ENCODE measurements at regions of chr12 and their contacts with region 1.

Region 1: GRCh38 chr12:91877022-91877421 is 268.6 kb downstream of the BTG1 start:
- DNase-seq: peak; percentile 75 to 99 (median 86)
- ATAC-seq: peak; percentile 89
- H3K4me3 ChIP-seq: peak overlapping the region; percentile 16 to 29
- H3K4me3 Mint-ChIP-seq: peak overlapping the region; percentile 72
- H3K27ac ChIP-seq: peak overlapping the region; percentile 80 to 96
- H3K27ac Mint-ChIP-seq: peak overlapping the region; percentile 97
- H3K4me1 ChIP-seq: peaks cover 75% of the 10 kb centered on the region
- H3K4me1 Mint-ChIP-seq: peaks cover 74% of the 10 kb centered on the region
- H3K27me3 ChIP-seq: no peaks in the 10 kb centered on the region
- H3K27me3 Mint-ChIP-seq: no peaks in the 10 kb centered on the region
- CTCF ChIP-seq: no peak

Region 2: DNA sequence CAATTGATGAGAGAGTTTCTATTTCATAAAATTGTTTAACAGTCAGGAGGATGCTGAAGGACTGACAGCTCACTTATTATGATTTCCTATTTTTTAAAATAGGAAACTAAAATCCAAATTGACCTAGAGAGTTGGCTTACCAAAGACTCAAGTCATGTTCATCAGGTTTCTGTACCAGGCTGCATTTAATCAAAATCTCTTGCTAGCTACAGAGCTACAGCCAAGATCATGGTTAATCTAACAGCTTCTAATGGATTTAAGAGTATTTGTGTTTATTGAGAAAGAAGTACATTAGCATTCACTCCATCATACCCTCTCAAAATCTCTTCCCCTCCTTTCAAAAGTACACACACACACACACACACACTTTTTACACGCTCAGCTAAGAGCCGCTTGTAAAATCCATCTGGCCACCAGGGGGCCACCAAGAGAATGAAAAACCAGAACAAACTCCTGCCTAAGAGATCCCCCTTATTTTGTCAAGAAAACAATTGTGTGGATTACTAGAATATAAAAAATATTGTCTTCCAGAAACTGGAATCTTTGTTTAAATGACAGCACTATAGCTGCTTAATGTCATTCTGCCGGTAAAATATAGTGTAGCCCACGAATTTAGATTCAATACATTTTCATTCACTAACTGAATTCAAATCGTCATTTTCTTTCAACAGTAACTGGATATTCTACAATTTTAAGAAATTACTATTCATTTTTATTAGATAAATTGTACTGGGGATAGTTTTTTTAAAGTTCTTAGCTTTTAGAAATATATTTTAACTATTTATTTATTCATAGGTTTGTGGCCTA is 65.3 kb before region 1 on chr12:
- CTCF ChIA-PET with region 1: interaction called, 25 read pairs
- POLR2A ChIA-PET with region 1: interaction called, 8 read pairs
- intact Hi-C with region 1: loop called (anchors 1 to 5 kb)
- DNase-seq: peak; percentile 69 to 87 (median 81)
- ATAC-seq: peak; percentile 89
- H3K4me3 ChIP-seq: no peak overlapping the region
- H3K4me3 Mint-ChIP-seq: no peak overlapping the region
- H3K27ac ChIP-seq: no peak overlapping the region
- H3K27ac Mint-ChIP-seq: peak overlapping the region; percentile 89
- H3K4me1 ChIP-seq: peaks cover 5% of the 10 kb centered on the region
- H3K4me1 Mint-ChIP-seq: peaks cover 30% of the 10 kb centered on the region
- H3K27me3 ChIP-seq: no peaks in the 10 kb centered on the region
- H3K27me3 Mint-ChIP-seq: no peaks in the 10 kb centered on the region
- CTCF ChIP-seq: peak; percentile 84

Region 3: DNA sequence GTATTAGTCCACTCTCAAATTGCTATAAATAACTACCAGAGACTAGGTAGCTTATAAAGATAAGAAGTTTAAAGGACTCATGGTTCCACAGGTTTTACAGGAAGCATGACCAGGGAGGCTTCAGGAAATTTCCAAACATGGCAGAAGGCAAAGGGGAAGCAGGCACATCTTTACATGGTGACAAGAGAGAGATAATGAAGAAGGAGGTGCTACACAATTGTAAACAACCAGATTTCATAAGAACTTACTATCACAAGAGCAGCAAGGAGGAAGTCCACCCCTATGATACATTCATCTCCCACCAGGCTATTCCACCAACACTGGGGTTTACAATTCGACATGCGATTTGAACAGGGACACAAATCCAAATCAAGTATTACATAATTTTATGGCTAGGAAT is 10.9 kb after region 1 on chr12:
- CTCF ChIA-PET with region 1: interaction called, 3 read pairs
- POLR2A ChIA-PET with region 1: interaction called, 4 read pairs
- intact Hi-C with region 1: loop called in 1 of 2 experiments (anchors 1 kb)
- DNase-seq: no peak
- ATAC-seq: no peak
- H3K4me3 ChIP-seq: no peak overlapping the region
- H3K4me3 Mint-ChIP-seq: no peak overlapping the region
- H3K27ac ChIP-seq: no peak overlapping the region
- H3K27ac Mint-ChIP-seq: no peak overlapping the region
- H3K4me1 ChIP-seq: no peaks in the 10 kb centered on the region
- H3K4me1 Mint-ChIP-seq: peaks cover 5% of the 10 kb centered on the region
- H3K27me3 ChIP-seq: no peaks in the 10 kb centered on the region
- H3K27me3 Mint-ChIP-seq: no peaks in the 10 kb centered on the region
- CTCF ChIP-seq: no peak

Region 4: DNA sequence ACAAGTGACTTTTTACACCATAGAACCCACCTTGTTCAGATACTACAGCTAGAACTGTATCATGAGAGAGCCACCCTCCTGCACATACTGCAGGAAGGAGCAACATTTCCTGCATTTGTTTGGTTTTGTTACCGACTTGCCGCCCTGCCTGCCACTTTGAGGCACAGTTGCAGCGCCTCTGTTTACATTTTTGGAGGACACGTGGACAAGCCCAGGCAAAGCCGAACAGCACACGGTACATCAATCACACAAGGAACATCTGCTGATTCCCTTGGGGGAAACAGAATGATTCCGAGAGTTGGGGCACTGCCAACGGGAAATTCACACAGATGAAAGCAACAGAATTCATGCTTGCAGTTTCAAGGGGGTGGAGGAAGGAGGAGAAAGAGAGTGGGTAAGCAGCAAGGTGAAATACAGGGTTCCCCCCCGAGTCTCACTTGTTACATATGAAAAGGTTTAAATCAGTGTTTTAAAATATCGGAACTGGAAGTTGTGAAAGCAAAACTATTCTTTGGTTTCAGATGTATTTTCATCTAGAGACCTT is 157.9 kb after region 1 on chr12:
- CTCF ChIA-PET with region 1: interaction called, 4 read pairs
- POLR2A ChIA-PET with region 1: interaction called, 24 read pairs
- intact Hi-C with region 1: loop called (anchors 2 to 5 kb)
- DNase-seq: peak; percentile 12 to 84 (median 63)
- ATAC-seq: peak; percentile 57
- H3K4me3 ChIP-seq: peak overlapping the region; percentile 38 to 41
- H3K4me3 Mint-ChIP-seq: peak overlapping the region; percentile 86
- H3K27ac ChIP-seq: peak overlapping the region; percentile 61 to 83
- H3K27ac Mint-ChIP-seq: peak overlapping the region; percentile 98
- H3K4me1 ChIP-seq: peaks cover 84% of the 10 kb centered on the region
- H3K4me1 Mint-ChIP-seq: peaks cover 96% of the 10 kb centered on the region
- H3K27me3 ChIP-seq: no peaks in the 10 kb centered on the region
- H3K27me3 Mint-ChIP-seq: no peaks in the 10 kb centered on the region
- CTCF ChIP-seq: no peak

Region 5: GRCh38 chr12:92396647-92397252 is 519.7 kb after region 1 on chr12:
- CTCF ChIA-PET with region 1: no interaction called
- POLR2A ChIA-PET with region 1: no interaction called
- intact Hi-C with region 1: loop called (anchors 5 kb)
- DNase-seq: no peak
- ATAC-seq: no peak
- H3K4me3 ChIP-seq: no peak overlapping the region
- H3K4me3 Mint-ChIP-seq: peak overlapping the region; percentile 4
- H3K27ac ChIP-seq: peak overlapping the region; percentile 2 to 46
- H3K27ac Mint-ChIP-seq: peak overlapping the region; percentile 95
- H3K4me1 ChIP-seq: peaks cover 88% of the 10 kb centered on the region
- H3K4me1 Mint-ChIP-seq: peaks cover 93% of the 10 kb centered on the region
- H3K27me3 ChIP-seq: no peaks in the 10 kb centered on the region
- H3K27me3 Mint-ChIP-seq: no peaks in the 10 kb centered on the region
- CTCF ChIP-seq: no peak

Region 6: DNA sequence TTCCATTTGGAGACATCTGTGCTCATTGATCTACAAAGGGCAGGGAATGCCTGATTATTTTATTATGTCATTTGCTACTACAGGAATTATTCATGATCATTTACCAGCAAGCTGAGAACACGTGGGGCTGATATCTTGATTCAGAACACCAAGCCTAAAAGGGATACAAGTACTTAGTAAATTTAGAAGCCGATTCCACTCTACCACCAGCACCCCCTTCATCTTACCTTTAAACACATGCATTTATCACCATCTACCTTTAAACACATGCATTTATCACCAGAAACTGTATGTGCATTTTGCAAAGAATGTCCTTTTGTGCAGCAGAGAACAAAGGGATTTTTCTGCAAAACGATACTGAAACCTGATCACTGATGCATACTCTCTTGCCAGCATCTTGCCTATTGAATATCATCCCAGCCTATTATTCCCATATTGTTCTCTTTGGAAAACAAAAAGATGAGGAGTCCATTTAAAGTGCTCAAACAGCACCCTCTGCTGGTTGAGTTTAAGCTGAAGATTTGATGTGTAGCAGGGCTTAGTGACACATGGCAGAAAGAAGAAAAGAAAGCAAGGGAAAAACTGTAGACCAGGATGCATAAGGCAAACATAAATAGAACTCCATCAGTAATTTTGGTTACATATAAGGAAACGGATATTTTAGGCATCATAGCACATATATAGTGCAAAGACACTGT is 693.2 kb after region 1 on chr12:
- CTCF ChIA-PET with region 1: interaction called, 3 read pairs
- POLR2A ChIA-PET with region 1: no interaction called
- intact Hi-C with region 1: loop called in 1 of 2 experiments (anchors 5 kb)
- DNase-seq: peak in 7 of 9 experiments; percentile 25 to 83 (median 45)
- ATAC-seq: peak; percentile 93
- H3K4me3 ChIP-seq: peak overlapping the region in 1 of 2 experiments; percentile 30
- H3K4me3 Mint-ChIP-seq: no peak overlapping the region
- H3K27ac ChIP-seq: no peak overlapping the region
- H3K27ac Mint-ChIP-seq: no peak overlapping the region
- H3K4me1 ChIP-seq: peaks cover 22% of the 10 kb centered on the region
- H3K4me1 Mint-ChIP-seq: peaks cover 6% of the 10 kb centered on the region
- H3K27me3 ChIP-seq: no peaks in the 10 kb centered on the region
- H3K27me3 Mint-ChIP-seq: no peaks in the 10 kb centered on the region
- CTCF ChIP-seq: peak; percentile 98

Region 7: DNA sequence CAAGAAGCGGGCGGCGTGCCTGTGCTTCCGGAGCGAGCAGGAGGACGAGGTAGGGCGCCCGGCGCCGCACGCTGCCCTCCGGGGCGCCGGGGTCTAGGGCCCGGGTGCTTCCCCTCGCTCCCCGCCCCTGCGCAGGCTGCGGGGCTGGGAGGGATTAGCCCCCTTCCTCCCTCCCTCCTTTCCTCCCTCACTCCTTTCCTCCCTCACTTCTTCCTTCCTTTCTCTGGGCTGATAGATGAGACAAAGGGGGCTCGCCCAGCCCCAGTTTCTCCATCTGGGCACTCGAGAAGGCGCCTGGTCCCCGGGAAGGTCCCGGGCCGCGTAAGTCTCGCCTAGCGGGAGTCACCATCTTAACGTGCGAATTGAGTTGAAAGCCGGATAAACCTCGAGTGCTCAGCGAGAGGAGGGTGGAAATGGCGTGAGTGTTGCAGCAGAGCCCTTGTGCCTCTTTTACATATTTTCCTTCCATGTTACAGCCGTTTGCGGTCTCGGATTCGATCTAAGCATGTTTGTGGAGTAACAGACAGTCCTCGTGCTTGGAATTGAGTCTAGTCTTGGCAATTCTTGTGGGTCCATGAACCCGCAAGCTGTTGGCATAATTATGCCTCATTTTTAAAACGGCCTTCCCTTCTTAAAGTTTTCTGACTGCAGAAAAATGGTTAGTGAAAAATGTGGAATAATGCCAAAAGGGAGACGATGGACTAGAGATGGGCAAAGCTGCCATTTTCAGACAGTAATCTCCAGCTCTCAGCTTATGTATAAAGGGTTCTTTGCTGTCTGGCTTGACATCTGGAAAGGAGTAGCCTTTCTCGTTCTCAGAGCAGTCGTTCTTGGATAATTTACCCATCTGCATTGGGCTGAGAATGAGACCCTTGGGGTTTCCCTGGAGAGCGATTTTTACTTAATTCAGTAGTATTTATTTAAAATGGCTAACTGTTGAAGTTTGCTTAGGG is 1501.6 kb after region 1 on chr12:
- CTCF ChIA-PET with region 1: no interaction called
- POLR2A ChIA-PET with region 1: no interaction called
- intact Hi-C with region 1: loop called in 1 of 2 experiments (anchors 5 kb)
- DNase-seq: peak; percentile 18 to 85 (median 57)
- ATAC-seq: peak; percentile 54
- H3K4me3 ChIP-seq: peak overlapping the region; percentile 72 to 87
- H3K4me3 Mint-ChIP-seq: peak overlapping the region; percentile 99
- H3K27ac ChIP-seq: peak overlapping the region; percentile 77 to 81
- H3K27ac Mint-ChIP-seq: peak overlapping the region; percentile 99
- H3K4me1 ChIP-seq: peaks cover 23% of the 10 kb centered on the region
- H3K4me1 Mint-ChIP-seq: peaks cover 44% of the 10 kb centered on the region
- H3K27me3 ChIP-seq: no peaks in the 10 kb centered on the region
- H3K27me3 Mint-ChIP-seq: no peaks in the 10 kb centered on the region
- CTCF ChIP-seq: no peak